ENCODE measurements at regions of chr1 and their contacts with region 1.

Region 1: GRCh38 chr1:169928438-169929209 is 34.9 kb upstream of the SCYL3 start:
- DNase-seq: no peak
- H3K4me3 ChIP-seq: no peak overlapping the region
- CTCF ChIP-seq: peak; percentile 52

Region 2: DNA sequence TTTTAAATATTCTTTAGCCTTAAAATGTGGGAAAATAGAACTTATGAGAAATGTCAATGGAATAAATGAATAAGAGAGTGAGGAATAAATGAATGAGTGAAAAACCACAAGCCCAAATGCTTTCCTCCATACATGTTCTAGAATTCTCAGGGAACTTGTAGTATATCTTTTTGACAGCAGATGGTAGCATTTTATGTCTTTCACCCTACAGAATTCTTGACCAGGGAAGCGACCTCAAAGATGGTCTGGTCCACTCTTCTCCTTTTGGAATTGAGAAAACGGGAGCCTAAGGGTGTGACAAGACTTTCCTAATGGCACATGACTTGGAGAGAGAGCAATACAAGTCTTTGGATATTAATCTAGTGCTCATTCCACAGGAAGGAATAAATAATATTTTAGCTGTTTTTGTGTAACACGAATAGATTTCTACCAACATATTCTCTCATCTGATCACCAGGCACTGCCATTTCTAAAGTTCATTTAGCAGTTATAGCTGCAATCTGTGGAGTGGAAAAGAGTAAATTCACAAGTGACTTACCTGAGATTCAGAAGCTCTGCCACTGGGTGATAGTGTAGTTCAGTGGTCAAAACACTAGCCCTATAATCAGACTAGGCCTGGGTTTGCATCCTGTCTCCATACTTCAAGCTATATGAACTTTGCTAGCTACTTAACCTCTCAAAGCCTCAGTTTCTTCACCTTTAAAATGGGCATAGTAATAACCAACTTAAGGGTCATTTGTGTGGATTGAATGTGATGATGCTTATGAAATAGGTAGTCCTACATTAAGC is 327.3 kb before region 1 on chr1:
- CTCF ChIA-PET with region 1: no interaction called
- POLR2A ChIA-PET with region 1: no interaction called
- DNase-seq: no peak
- H3K4me3 ChIP-seq: no peak overlapping the region
- CTCF ChIP-seq: no peak

Region 3: DNA sequence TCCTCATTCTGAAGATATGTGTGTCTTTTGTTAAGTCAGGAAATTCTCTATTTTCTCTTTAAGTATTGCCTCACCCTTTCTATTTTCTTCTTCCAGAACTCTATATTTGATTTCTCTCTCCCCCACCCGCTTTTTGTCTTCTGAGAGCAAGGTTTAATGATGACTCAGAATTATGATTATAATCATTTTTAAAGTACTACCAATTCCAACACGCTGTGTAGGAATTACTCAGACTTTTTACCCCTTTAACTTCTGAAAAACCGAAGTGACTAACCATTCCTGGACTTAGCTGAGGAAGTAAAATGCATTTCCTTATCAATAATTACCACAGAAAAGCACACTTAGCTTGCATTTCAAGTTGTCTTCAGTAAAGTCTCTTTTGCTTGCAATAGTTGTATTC is 14.1 kb before region 1 on chr1:
- CTCF ChIA-PET with region 1: interaction called, 39 read pairs
- POLR2A ChIA-PET with region 1: no interaction called
- DNase-seq: no peak
- H3K4me3 ChIP-seq: no peak overlapping the region
- CTCF ChIP-seq: no peak

Region 4: GRCh38 chr1:170765712-170766330 is 837.2 kb after region 1 on chr1:
- CTCF ChIA-PET with region 1: interaction called, 17 read pairs
- POLR2A ChIA-PET with region 1: no interaction called
- DNase-seq: peak; percentile 17
- H3K4me3 ChIP-seq: no peak overlapping the region
- CTCF ChIP-seq: peak; percentile 55

Region 5: GRCh38 chr1:170881268-170882265 is 952.9 kb after region 1 on chr1:
- CTCF ChIA-PET with region 1: interaction called, 10 read pairs
- POLR2A ChIA-PET with region 1: no interaction called
- DNase-seq: no peak
- H3K4me3 ChIP-seq: no peak overlapping the region
- CTCF ChIP-seq: peak; percentile 27

Region 6: GRCh38 chr1:170929835-170930554 is 1001.4 kb after region 1 on chr1:
- CTCF ChIA-PET with region 1: interaction called, 27 read pairs
- POLR2A ChIA-PET with region 1: no interaction called
- DNase-seq: no peak
- H3K4me3 ChIP-seq: no peak overlapping the region
- CTCF ChIP-seq: peak; percentile 54

Measured in AG04449 (cell line).